Stomach (tissue), 19 donors: ENCODE measurements at regions of chr12 and their contacts with region 1.

Region 1: DNA sequence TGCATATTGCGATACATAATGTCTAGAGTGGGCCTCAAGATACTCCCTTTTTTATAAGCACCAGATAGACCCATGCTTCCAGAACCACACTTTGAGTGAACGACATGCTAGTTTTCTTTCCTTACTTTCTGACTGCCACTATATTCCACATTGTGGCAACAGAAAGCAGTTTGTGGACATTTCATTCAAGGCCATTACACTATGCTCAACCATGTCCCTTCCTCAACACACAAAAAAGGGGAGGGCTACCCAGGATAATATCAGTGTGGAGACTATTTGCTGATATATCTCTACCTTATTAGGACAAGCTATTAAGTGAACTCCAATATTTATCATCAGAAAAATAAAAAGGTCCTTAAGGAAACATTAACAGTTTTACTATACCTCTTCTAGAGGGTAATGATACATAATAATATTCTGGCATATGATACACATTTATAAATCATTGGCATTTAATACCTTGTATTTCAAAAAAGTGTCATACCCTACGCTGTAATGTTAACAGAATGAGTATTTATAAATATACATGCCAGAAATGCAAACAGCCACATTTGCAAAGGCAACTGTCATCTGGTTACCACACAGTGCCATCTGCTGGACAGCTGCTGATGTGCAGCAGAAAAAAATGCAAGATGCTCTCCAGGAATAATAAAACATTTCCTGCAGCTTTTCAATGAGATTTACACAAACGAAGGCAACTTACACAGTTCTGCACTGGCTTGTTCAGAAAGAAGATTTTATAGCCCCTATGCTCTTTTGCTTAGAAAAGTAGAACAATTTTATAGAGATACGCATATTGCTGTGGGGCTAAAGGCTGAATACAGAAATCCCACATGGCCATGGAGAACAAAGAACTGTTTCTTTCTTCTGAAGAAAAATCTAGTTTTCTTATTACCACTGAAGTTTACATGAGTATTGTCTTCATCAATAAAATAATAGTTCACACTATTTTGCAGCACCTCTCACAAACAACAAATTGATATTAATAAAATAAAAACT is 182.2 kb upstream of the GRIP1 start:
- DNase-seq: peak; percentile 65 to 89
- H3K4me3 ChIP-seq: no peak overlapping the region
- H3K27ac ChIP-seq: no peak overlapping the region
- H3K4me1 ChIP-seq: peaks cover 0 to 6% (median 0%) of the 10 kb centered on the region in 4 donors
- H3K27me3 ChIP-seq: no peaks in the 10 kb centered on the region
- CTCF ChIP-seq: peak in 5 of 7 experiments; percentile 58 to 88 (median 80)
- EP300 ChIP-seq: no peak
- POLR2A ChIP-seq: no peak

Region 2: GRCh38 chr12:66688846-66689439 is 172.1 kb before region 1 on chr12:
- intact Hi-C with region 1: loop called (anchors 10 kb)
- DNase-seq: peak; percentile 51 to 84
- H3K4me3 ChIP-seq: no peak overlapping the region
- H3K27ac ChIP-seq: no peak overlapping the region
- H3K4me1 ChIP-seq: peaks cover 0 to 3% (median 0%) of the 10 kb centered on the region in 4 donors
- H3K27me3 ChIP-seq: no peaks in the 10 kb centered on the region
- CTCF ChIP-seq: peak in 5 of 7 experiments; percentile 29 to 63 (median 37)
- EP300 ChIP-seq: no peak
- POLR2A ChIP-seq: no peak

Region 3: DNA sequence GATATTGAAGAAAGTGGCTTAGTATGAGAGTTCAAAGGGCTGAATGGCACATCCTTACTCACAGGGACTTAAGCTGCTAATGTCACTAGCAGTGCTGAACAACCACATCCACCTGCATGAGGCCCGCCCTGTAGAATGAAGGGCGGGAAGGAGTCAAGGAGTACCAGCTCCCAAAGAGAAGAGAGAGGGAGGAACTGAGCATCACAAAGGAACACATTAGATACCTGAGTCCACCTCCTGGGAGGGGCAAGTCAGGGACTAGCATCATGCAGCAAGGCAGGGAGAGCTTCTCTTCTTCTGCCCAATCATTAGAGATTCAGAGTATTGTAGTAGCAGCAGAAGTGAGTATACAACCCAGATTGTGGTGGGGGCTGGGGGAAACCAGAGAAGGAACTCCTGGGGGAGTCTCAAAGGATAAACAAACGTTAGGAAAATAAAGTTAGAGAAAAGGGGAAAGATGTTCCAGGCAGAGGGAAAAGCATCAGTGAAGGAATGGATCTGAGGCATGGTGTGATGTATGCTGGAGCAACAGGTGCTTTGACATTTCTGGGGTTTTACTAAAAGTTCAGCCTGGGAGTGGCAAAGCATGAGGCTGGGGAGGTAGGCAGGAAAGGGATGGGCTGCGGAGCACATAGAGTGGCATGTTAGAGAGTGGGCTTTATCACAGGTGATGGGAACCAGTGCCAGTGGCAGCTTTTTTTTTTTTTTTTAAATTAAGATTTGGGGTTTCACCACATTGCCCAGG is 161.1 kb before region 1 on chr12:
- intact Hi-C with region 1: no loop called
- DNase-seq: no peak
- H3K4me3 ChIP-seq: no peak overlapping the region
- H3K27ac ChIP-seq: no peak overlapping the region
- H3K4me1 ChIP-seq: no peaks in the 10 kb centered on the region
- H3K27me3 ChIP-seq: peaks cover 0 to 5% (median 0%) of the 10 kb centered on the region in 3 donors
- CTCF ChIP-seq: no peak
- EP300 ChIP-seq: no peak
- POLR2A ChIP-seq: no peak

Region 4: GRCh38 chr12:66803930-66804329 is 57.1 kb before region 1 on chr12:
- intact Hi-C with region 1: no loop called
- DNase-seq: peak in 1 of 2 donors; percentile 15
- H3K4me3 ChIP-seq: no peak overlapping the region
- H3K27ac ChIP-seq: no peak overlapping the region
- H3K4me1 ChIP-seq: peaks cover 0 to 5% (median 0%) of the 10 kb centered on the region in 4 donors
- H3K27me3 ChIP-seq: no peaks in the 10 kb centered on the region
- CTCF ChIP-seq: no peak
- EP300 ChIP-seq: no peak
- POLR2A ChIP-seq: no peak